Posterior vena cava (tissue), 2 donors: ENCODE measurements at regions of chr15 and their contacts with region 1.

Region 1: GRCh38 chr15:61146931-61147230 is 82.2 kb downstream of the RORA start:
- DNase-seq: no peak

Region 2: DNA sequence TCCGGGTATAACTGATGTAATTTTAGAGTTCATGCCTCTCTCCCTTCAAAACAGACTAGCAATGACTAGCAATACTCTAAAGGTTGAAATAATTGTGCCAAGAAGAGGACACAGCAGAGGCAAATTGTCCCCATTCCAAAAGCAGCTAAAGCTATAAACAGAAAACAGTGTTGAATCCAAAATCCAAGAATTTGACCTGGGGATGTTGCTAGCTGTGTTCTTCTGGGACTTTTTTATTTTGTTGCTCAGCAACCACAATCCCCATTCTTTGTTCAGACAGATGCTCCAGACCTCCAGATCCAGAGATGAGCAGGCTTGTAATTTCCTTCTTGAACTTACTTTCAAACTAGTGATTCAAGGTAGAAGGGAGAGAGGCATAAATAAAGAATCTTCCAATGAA is 951.3 kb before region 1 on chr15:
- intact Hi-C with region 1: no loop called
- DNase-seq: no peak

Region 3: DNA sequence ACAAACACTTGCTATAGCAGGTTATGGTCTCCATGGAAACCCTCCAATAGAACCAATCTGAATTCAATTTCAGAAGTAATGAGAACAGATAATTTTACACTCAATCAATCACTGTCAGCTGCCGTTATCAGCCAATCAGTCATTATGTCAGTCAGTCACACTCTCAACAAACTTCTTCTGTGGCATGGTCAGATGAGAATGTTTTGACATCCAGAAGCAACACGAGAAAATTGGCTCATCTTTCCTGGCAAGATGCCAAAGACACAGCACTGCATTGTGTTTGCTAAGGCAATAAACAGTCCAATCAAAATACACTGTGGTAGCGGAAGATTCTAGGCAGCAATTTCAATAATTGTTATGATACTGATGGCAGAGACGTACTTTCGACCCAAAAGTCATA is 108.5 kb before region 1 on chr15:
- intact Hi-C with region 1: no loop called
- DNase-seq: no peak

Region 4: DNA sequence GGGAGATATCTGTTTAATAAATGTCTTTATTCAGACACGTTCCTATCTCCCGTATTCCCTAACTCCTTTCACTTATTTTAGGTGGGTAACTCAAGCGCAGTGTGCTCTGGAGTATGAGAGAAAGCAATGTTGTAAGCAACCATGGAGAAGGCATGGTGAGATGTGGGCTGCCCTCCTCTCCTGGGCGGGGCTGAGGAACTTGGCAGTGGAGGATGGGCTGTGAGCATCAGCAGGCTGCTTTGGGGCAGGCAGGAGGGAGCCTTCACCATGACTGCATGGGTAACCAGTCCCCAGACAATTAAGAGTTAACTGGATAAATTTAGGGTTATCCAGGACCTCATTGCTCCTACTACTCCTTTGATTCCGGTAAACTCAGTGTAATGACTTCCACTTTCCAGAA is 43.9 kb before region 1 on chr15:
- intact Hi-C with region 1: loop called in 1 of 2 experiments (anchors 1 kb)
- DNase-seq: no peak

Region 5: GRCh38 chr15:61195116-61196002 is 48.5 kb after region 1 on chr15:
- intact Hi-C with region 1: no loop called
- DNase-seq: no peak

Region 6: GRCh38 chr15:61205346-61205921 is 58.6 kb after region 1 on chr15:
- intact Hi-C with region 1: no loop called
- DNase-seq: no peak